Caco-2 (cell line): ENCODE measurements at regions of chr20 and their contacts with region 1.

Region 1: DNA sequence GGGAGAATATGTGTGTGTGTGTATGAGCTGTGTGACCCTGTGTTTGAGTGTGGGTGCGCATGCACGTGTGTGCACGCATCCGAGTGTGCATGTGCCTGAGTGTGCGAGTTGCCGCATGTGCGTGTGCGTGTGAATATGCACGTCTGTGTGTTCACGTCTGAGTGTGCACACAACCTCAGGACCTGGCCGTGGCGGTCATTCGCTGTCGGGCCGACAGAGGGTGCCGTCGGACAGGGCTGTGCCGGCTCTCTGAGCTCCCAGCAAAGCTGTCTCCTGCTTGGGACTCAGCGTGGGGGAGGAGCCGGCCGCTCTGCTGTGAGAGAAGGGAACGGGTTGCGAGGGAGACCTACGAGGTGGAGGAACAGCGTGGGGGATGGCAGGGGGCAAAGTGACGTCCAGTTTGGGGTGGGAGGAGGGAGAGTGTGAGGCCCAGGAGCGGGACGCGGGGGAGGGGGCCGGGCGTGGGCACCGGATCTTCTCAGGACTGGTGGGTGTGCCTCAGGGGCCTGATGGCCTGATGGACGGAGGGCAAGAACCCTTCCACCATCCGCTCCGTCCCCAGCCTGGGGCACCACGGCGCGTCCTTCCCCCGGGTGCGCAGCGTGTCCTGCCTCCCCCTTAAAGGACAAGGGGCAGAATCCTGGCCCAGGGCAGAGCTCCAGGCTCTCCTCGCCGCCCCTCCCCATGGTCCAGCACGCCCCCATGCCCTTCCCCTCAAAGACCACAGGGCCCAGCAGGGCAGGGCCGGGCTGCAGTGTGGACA is 19.9 kb downstream of the SLC17A9 start:
- DNase-seq: peak; percentile 96 to 99
- H3K4me3 ChIP-seq: peak overlapping the region; percentile 43
- H3K4me3 Mint-ChIP-seq: peak overlapping the region; percentile 70
- H3K27ac Mint-ChIP-seq: no peak overlapping the region
- H3K4me1 ChIP-seq: peaks cover 7% of the 10 kb centered on the region
- H3K4me1 Mint-ChIP-seq: peaks cover 13% of the 10 kb centered on the region
- H3K27me3 ChIP-seq: no peaks in the 10 kb centered on the region
- H3K27me3 Mint-ChIP-seq: no peaks in the 10 kb centered on the region
- CTCF ChIP-seq: peak; percentile 99

Region 2: GRCh38 chr20:62953839-62954703 is 18.4 kb before region 1 on chr20:
- CTCF ChIA-PET with region 1: interaction called, 15 read pairs
- POLR2A ChIA-PET with region 1: no interaction called
- intact Hi-C with region 1: loop called (anchors 2 kb)
- DNase-seq: no peak
- H3K4me3 ChIP-seq: peak overlapping the region; percentile 60
- H3K4me3 Mint-ChIP-seq: peak overlapping the region; percentile 85
- H3K27ac Mint-ChIP-seq: peak overlapping the region; percentile 93
- H3K4me1 ChIP-seq: peaks cover 45% of the 10 kb centered on the region
- H3K4me1 Mint-ChIP-seq: peaks cover 35% of the 10 kb centered on the region
- H3K27me3 ChIP-seq: no peaks in the 10 kb centered on the region
- H3K27me3 Mint-ChIP-seq: no peaks in the 10 kb centered on the region
- CTCF ChIP-seq: no peak

Region 3: GRCh38 chr20:63014710-63015109 is 42.3 kb after region 1 on chr20:
- CTCF ChIA-PET with region 1: interaction called, 37 read pairs
- POLR2A ChIA-PET with region 1: interaction called, 4 read pairs
- intact Hi-C with region 1: loop called (anchors 1 kb)
- DNase-seq: peak; percentile 96 to 97
- H3K4me3 ChIP-seq: peak overlapping the region; percentile 36
- H3K4me3 Mint-ChIP-seq: peak overlapping the region; percentile 81
- H3K27ac Mint-ChIP-seq: peak overlapping the region; percentile 81
- H3K4me1 ChIP-seq: peaks cover 55% of the 10 kb centered on the region
- H3K4me1 Mint-ChIP-seq: peaks cover 46% of the 10 kb centered on the region
- H3K27me3 ChIP-seq: no peaks in the 10 kb centered on the region
- H3K27me3 Mint-ChIP-seq: no peaks in the 10 kb centered on the region
- CTCF ChIP-seq: no peak

Region 4: GRCh38 chr20:63172720-63173119 is 200.3 kb after region 1 on chr20:
- CTCF ChIA-PET with region 1: interaction called, 14 read pairs
- POLR2A ChIA-PET with region 1: no interaction called
- intact Hi-C with region 1: no loop called
- DNase-seq: peak in 1 of 2 experiments; percentile 67
- H3K4me3 ChIP-seq: no peak overlapping the region
- H3K4me3 Mint-ChIP-seq: no peak overlapping the region
- H3K27ac Mint-ChIP-seq: no peak overlapping the region
- H3K4me1 ChIP-seq: peaks cover 30% of the 10 kb centered on the region
- H3K4me1 Mint-ChIP-seq: peaks cover 6% of the 10 kb centered on the region
- H3K27me3 ChIP-seq: peaks cover 7% of the 10 kb centered on the region; the same call in 1 of the 2 replicates
- H3K27me3 Mint-ChIP-seq: peaks cover 32% of the 10 kb centered on the region
- CTCF ChIP-seq: peak; percentile 52 to 66

Region 5: DNA sequence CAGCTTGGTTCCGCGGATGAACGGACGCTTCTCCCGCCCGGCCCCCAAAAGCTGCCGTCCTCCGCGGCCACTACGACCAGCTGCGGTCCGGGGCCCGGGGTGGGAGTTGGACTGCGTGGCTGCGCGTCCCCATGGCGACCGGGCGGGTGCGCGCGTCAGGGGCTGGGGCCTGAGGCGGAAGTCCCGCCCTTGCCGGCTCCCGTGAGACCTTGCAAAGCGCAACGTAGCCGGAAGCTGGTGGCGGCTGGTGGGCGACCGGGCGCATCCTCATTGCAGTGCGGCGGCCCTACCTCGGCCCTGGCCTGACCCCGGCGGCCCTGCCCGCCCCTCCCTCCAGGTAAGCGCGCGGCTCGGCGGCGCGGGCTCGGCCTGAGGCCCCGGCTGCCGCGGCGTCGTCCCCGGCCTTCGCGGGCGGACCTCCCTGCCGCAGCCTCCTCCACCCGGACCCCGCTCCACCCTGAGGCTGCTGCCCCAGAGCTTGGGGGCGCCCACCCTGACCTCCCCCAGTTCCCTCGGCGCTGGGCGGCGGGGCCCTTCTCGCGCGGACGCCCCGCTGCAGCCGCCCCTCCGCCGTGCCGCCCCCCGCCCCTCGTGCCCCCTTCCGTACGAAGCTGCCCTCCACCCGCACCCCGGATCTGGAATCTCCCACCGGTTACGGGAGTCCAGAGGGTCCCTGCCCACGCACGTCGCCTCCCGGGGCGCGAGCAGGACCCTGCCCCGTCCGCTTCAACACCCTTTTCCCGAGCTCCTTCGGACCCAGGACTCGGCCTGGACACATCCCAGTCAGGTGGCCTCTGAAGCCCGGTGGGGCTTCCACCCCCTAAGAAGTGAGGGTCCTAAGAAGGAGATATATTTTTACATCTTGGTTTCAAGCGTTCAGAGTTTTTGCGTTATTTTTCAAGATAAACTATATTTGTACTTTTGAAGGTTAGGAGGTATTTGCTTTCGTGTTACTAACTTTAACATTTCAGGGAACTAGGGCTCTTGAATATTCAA is 300.4 kb after region 1 on chr20 and contains the start of gene ARFGAP1:
- CTCF ChIA-PET with region 1: interaction called, 16 read pairs
- POLR2A ChIA-PET with region 1: no interaction called
- intact Hi-C with region 1: no loop called
- DNase-seq: peak; percentile 96 to 98
- H3K4me3 ChIP-seq: peak within 1 kb of the TSS; percentile 97
- H3K4me3 Mint-ChIP-seq: peak within 1 kb of the TSS; percentile 81
- H3K27ac Mint-ChIP-seq: peak within 1 kb of the TSS; percentile 86
- H3K4me1 ChIP-seq: peaks cover 18% of the 10 kb centered on the region
- H3K4me1 Mint-ChIP-seq: peaks cover 23% of the 10 kb centered on the region
- H3K27me3 ChIP-seq: no peaks in the 10 kb centered on the region
- H3K27me3 Mint-ChIP-seq: no peaks in the 10 kb centered on the region
- CTCF ChIP-seq: no peak
- total RNA-seq, gene ARFGAP1: 275 and 286 TPM in 2 replicates